Activated CD8-positive, alpha-beta memory T cell treated with anti-CD3 and anti-CD28 coated beads, Interleukin-2, amount 10 ng/mL, durations not matched to agents 7 days and 5 days (primary cell): ENCODE measurements at regions of chr5 and their contacts with region 1.

Region 1: GRCh38 chr5:7868773-7869473 is at the starts of genes FASTKD3 and MTRR:
- DNase-seq: peak; percentile 94
- ATAC-seq: peak; percentile 98
- H3K4me3 Mint-ChIP-seq: peak within 1 kb of the TSS; percentile 89
- H3K27ac Mint-ChIP-seq: peak within 1 kb of the TSS; percentile 87
- H3K4me1 Mint-ChIP-seq: peaks cover 61% of the 10 kb centered on the region
- H3K27me3 Mint-ChIP-seq: no peaks in the 10 kb centered on the region
- total RNA-seq, gene FASTKD3: 10.5 to 14.7 TPM
- total RNA-seq, gene MTRR: 46.9 to 62.4 TPM

Region 2: GRCh38 chr5:7794301-7795222 is 74.4 kb before region 1 on chr5:
- CTCF ChIA-PET with region 1: no interaction called
- DNase-seq: no peak
- ATAC-seq: no peak
- H3K4me3 Mint-ChIP-seq: no peak overlapping the region
- H3K27ac Mint-ChIP-seq: no peak overlapping the region
- H3K4me1 Mint-ChIP-seq: no peaks in the 10 kb centered on the region
- H3K27me3 Mint-ChIP-seq: peaks cover 3% of the 10 kb centered on the region

Region 3: DNA sequence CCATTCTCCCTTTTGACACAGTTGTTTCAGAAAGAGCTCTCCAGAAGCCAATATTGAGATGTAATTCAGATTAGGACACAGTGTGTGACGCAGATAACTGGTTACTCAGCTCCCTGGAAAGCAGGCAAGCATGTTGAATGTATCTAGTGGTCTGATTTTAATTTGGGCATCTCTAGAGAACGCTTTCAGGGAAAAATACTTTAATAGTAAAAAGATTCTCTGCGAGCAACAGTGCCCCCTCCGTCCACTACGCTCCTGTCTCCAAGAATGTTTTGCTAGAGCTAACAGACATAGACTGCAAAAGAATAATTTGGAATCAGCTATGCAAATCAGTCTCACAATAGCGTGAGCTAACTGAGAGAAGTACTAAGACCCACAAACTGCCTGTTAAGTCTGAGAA is 41.3 kb before region 1 on chr5:
- CTCF ChIA-PET with region 1: no interaction called
- DNase-seq: no peak
- ATAC-seq: no peak
- H3K4me3 Mint-ChIP-seq: no peak overlapping the region
- H3K27ac Mint-ChIP-seq: no peak overlapping the region
- H3K4me1 Mint-ChIP-seq: no peaks in the 10 kb centered on the region
- H3K27me3 Mint-ChIP-seq: peaks cover 18% of the 10 kb centered on the region

Region 4: GRCh38 chr5:7856855-7857254 is 12.1 kb before region 1 on chr5:
- CTCF ChIA-PET with region 1: interaction called, 14 read pairs
- DNase-seq: peak; percentile 59
- ATAC-seq: peak; percentile 73
- H3K4me3 Mint-ChIP-seq: no peak overlapping the region
- H3K27ac Mint-ChIP-seq: no peak overlapping the region
- H3K4me1 Mint-ChIP-seq: peaks cover 29% of the 10 kb centered on the region
- H3K27me3 Mint-ChIP-seq: peaks cover 16% of the 10 kb centered on the region

Region 5: GRCh38 chr5:7886849-7887475 is 18.0 kb after region 1 on chr5:
- CTCF ChIA-PET with region 1: interaction called, 69 read pairs
- DNase-seq: no peak
- ATAC-seq: no peak
- H3K4me3 Mint-ChIP-seq: no peak overlapping the region
- H3K27ac Mint-ChIP-seq: no peak overlapping the region
- H3K4me1 Mint-ChIP-seq: peaks cover 6% of the 10 kb centered on the region
- H3K27me3 Mint-ChIP-seq: no peaks in the 10 kb centered on the region

Region 6: DNA sequence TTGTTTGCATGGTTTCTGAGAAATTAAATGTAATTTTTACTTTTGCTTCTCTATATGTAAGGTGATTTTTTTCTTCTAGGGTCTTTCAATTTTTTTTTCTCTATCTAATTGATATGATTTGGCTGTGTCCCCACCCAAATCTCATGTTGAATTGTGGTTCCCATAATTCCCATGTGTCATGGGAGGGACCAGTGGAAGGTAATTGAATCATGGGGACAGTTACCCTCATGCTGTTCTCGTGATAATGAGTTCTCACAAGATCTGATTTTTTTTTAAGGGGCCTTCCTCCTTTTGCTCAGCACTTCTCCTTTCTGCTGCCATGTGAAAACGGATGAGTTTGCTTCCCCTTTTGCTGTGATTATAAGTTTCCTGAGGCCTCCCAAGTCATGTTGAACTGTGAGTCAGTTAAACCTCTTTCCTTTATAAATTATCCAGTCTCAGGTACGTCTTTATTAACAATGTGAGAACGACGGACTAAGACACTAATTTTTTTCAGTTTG is 150.8 kb after region 1 on chr5:
- CTCF ChIA-PET with region 1: no interaction called
- DNase-seq: no peak
- ATAC-seq: no peak
- H3K4me3 Mint-ChIP-seq: no peak overlapping the region
- H3K27ac Mint-ChIP-seq: no peak overlapping the region
- H3K4me1 Mint-ChIP-seq: no peaks in the 10 kb centered on the region
- H3K27me3 Mint-ChIP-seq: no peaks in the 10 kb centered on the region